Activated B cell treated with CpG ODN at 0.5 μM for 24 hours (primary cell): ENCODE measurements at regions of chr3 and their contacts with region 1.

Region 1: DNA sequence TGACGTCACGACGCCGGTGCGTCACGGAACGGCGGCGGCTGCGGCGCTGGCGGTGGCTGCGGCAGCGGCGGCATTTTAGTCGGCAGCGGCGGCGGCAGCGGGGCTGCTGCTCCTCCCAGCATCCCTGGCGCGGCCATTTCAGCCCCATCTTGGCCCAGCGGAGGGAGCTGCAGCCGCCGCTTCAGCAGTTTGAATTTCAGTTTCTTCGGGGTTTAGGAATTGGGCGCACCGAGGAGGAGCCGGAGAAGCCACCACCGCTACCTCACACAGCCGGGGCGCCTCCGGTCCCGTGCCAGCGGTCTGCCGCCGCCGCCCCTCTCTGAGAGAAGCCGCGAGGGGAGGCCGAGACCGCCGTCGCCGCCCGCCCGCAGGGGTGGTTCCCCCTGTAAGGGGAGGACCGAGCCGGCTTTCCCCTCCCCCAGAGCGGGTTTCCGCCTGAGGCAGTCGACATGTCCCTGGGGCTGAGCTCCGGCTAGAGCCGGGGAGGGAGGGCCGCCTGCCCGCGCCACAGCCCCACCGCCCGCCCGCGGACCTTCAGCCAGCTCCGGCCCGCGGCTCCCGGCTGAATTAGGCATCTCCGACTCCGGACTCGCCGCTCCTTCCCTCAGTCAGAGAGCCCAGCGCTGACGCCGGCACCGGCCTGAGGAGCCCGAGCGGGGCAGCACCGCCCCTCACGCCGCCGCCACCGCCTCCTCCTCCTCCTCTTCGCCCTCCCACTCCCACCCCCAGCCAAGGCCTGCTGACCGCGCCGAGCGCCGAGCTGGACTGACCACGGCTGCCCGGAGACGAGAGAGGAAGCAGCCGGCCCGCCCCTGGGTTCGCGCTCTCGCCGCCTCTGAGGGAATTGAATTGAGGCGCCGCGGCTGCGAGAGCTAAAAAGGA is at the start of gene TSC22D2:
- DNase-seq: peak; percentile 99
- ATAC-seq: peak; percentile 71
- H3K4me3 Mint-ChIP-seq: peak within 1 kb of the TSS; percentile 94
- H3K27ac Mint-ChIP-seq: peak within 1 kb of the TSS; percentile 99
- H3K4me1 Mint-ChIP-seq: peaks cover 34% of the 10 kb centered on the region
- H3K27me3 Mint-ChIP-seq: no peaks in the 10 kb centered on the region
- CTCF ChIP-seq: no peak
- total RNA-seq, gene TSC22D2: 35.9 and 38.9 TPM in 2 replicates

Region 2: DNA sequence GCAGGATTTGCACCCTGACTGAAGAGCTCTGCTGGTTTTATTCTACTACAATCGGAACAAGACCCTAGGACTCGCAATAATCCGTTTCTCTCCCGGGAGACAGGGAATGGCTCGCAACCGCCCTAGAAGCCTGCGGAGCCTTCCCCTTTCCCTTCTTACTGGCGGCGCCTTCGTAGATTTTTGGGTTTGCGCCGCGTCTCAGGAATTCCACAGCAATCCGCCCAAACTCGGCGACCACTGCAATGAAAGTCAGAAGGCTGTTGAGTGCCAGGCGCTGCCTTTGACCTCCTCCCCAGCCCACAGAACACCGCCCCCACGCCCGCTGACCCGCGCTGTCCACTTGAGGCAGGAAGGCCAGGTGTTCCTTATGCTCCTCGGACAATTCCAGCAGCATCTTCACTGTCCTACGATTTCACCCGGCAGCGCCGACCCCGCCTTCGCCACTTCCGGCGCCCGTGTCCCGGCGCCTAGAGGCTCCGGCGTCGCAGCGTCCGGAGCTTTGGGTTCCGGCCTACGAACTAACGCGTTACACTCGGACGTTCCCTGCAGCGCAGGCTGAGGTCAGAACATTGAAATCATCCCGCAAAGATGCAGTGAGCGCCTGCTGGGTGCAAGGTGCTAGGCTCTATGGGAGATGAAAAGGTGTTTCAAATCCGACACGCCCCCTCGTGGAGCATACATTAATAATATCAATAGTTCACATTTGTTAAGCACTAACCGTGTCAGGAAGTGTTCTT is 656.2 kb before region 1 on chr3 and contains the start of gene COMMD2:
- CTCF ChIA-PET with region 1: no interaction called
- POLR2A ChIA-PET with region 1: interaction called, 3 read pairs
- intact Hi-C with region 1: loop called (anchors 2 kb)
- DNase-seq: peak; percentile 68
- ATAC-seq: peak; percentile 99
- H3K4me3 Mint-ChIP-seq: peak within 1 kb of the TSS; percentile 98
- H3K27ac Mint-ChIP-seq: peak within 1 kb of the TSS; percentile 92
- H3K4me1 Mint-ChIP-seq: peaks cover 30% of the 10 kb centered on the region
- H3K27me3 Mint-ChIP-seq: peaks cover 7% of the 10 kb centered on the region
- CTCF ChIP-seq: no peak
- total RNA-seq, gene COMMD2: 41.5 and 45.6 TPM in 2 replicates

Region 3: DNA sequence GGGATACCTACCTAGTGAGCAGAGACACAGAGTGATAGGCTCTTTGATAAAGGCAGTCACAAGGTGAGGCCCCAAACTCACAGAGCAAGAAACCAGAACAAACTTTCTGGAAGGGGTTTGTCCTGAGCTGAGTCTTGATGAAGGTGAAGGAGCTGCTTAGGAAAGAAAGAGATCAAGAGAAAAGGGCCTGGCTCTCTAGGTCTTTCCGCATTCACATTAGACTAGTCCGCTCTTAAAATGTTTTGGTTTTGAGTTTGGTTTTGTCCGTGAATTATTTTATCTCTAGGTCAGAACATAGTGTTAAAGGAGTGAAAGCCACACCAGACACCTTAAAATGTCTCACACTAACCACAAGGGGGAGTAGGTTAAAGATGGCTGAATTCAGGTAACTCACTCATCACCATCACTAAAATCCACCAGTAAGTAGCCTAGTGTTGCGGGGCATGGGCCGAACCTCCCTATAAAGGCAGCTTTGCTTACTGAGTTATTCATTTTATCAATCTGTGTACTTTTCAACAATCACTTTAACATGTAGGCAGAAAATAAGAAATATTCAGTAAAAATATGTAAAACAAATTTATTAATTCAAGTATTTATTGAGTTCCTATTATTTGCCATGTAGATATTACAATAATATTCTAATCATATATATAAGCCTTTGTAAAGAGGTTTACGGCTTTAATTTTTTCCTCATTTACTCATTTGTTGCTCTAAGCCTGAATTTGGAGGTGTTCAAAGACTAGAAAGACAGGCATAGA is 121.9 kb before region 1 on chr3:
- CTCF ChIA-PET with region 1: interaction called, 18 read pairs
- POLR2A ChIA-PET with region 1: interaction called, 4 read pairs
- intact Hi-C with region 1: loop called (anchors 1 kb)
- DNase-seq: no peak
- ATAC-seq: peak; percentile 74
- H3K4me3 Mint-ChIP-seq: no peak overlapping the region
- H3K27ac Mint-ChIP-seq: no peak overlapping the region
- H3K4me1 Mint-ChIP-seq: no peaks in the 10 kb centered on the region
- H3K27me3 Mint-ChIP-seq: peaks cover 21% of the 10 kb centered on the region
- CTCF ChIP-seq: peak; percentile 54

Region 4: GRCh38 chr3:150391200-150391599 is 17.3 kb before region 1 on chr3:
- CTCF ChIA-PET with region 1: interaction called, 3 read pairs
- POLR2A ChIA-PET with region 1: interaction called, 21 read pairs
- intact Hi-C with region 1: no loop called
- DNase-seq: no peak
- ATAC-seq: no peak
- H3K4me3 Mint-ChIP-seq: no peak overlapping the region
- H3K27ac Mint-ChIP-seq: no peak overlapping the region
- H3K4me1 Mint-ChIP-seq: peaks cover 9% of the 10 kb centered on the region
- H3K27me3 Mint-ChIP-seq: no peaks in the 10 kb centered on the region
- CTCF ChIP-seq: no peak

Region 5: GRCh38 chr3:150495563-150496168 is 87.2 kb after region 1 on chr3:
- CTCF ChIA-PET with region 1: interaction called, 26 read pairs
- POLR2A ChIA-PET with region 1: interaction called, 8 read pairs
- intact Hi-C with region 1: loop called (anchors 1 kb)
- DNase-seq: no peak
- ATAC-seq: peak; percentile 60
- H3K4me3 Mint-ChIP-seq: no peak overlapping the region
- H3K27ac Mint-ChIP-seq: no peak overlapping the region
- H3K4me1 Mint-ChIP-seq: no peaks in the 10 kb centered on the region
- H3K27me3 Mint-ChIP-seq: no peaks in the 10 kb centered on the region
- CTCF ChIP-seq: peak; percentile 75

Region 6: DNA sequence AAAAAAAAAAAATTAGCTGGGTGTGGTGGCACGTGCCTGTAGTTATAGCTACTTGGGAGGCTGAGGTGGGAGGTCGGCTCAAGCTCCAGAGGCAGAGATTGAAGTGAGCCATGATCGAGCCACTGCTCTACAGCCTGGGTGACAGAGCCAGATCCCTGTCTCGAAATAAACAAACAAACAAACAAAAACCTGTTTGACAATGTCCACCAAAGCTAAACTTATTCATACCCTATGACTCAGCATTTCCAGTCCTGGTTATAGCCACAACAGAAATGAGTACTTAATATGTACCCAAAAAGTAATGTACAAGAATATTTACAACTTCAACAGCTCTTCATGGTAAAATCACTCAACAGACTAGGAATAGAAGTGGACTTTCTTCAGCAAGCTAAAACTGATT is 106.7 kb after region 1 on chr3:
- CTCF ChIA-PET with region 1: no interaction called
- POLR2A ChIA-PET with region 1: no interaction called
- intact Hi-C with region 1: no loop called
- DNase-seq: no peak
- ATAC-seq: no peak
- H3K4me3 Mint-ChIP-seq: no peak overlapping the region
- H3K27ac Mint-ChIP-seq: no peak overlapping the region
- H3K4me1 Mint-ChIP-seq: no peaks in the 10 kb centered on the region
- H3K27me3 Mint-ChIP-seq: peaks cover 11% of the 10 kb centered on the region
- CTCF ChIP-seq: no peak

Region 7: DNA sequence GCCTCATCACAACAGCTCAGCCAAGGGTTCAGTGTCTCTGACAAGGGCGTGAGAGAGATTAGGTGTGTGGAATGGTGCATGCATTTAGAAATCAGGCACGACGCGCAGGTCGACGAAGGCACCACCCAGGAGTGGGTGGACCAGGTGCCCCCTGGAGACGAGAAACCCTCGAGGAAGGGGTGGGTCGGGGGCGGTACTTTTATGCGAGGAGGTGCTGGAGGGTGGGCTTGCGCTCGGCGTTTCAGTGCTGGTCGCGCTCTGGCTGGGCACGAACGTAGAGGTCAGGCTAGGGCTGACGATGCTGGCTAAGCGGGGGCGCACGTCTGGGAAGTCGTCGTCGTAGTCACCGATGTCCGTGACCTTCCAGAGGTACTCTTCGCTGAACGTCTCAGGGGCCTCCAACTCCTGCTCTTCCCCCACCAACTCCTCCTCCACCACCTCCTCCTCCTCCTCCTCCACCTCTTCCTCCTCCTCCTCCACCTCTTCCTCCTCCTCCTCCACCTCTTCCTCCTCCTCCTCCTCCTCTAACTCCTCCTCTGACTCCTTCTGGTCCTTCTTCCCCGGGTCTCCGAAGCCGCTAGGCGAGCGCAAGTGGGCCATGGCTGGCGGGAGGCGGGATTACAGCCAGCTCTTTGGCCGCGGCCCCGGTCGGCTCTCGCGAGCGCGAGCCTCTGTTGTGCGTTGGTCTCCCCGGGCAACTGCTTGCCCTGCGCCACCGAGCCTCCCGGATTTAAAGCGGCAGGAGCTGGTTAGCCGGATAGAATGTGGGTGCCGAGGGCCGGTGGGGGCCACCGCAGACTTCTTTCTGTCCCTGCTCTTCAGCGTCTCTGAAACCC is 295.1 kb after region 1 on chr3 and contains the start of gene ERICH6:
- CTCF ChIA-PET with region 1: no interaction called
- POLR2A ChIA-PET with region 1: interaction called, 4 read pairs
- intact Hi-C with region 1: loop called (anchors 5 kb)
- DNase-seq: peak; percentile 86
- ATAC-seq: peak; percentile 93
- H3K4me3 Mint-ChIP-seq: peak within 1 kb of the TSS; percentile 97
- H3K27ac Mint-ChIP-seq: peak within 1 kb of the TSS; percentile 98
- H3K4me1 Mint-ChIP-seq: peaks cover 19% of the 10 kb centered on the region
- H3K27me3 Mint-ChIP-seq: no peaks in the 10 kb centered on the region
- CTCF ChIP-seq: no peak
- total RNA-seq, gene ERICH6: not detected in 2 replicates